IMR-90 (cell line): ENCODE measurements at regions of chr14 and their contacts with region 1.

Region 1: GRCh38 chr14:39015360-39015961 is 87.6 kb downstream of the SEC23A start:
- DNase-seq: peak; percentile 59
- ATAC-seq: peak; percentile 84
- H3K4me3 ChIP-seq: no peak overlapping the region
- H3K27ac ChIP-seq: no peak overlapping the region
- H3K4me1 ChIP-seq: 0 out of 2 replicates have a peak, but pooled peaks cover 2% of the 10 kb centered on the region
- H3K27me3 ChIP-seq: no peaks in the 10 kb centered on the region
- CTCF ChIP-seq: peak; percentile 74
- POLR2A ChIP-seq: no peak
- RAD21 ChIP-seq: peak; percentile 69

Region 2: GRCh38 chr14:38605193-38606114 is 410.0 kb before region 1 on chr14:
- CTCF ChIA-PET with region 1: no interaction called
- POLR2A ChIA-PET with region 1: no interaction called
- dilution Hi-C with region 1: no loop called
- in situ Hi-C with region 1: no loop called
- intact Hi-C with region 1: loop called (anchors 10 kb)
- DNase-seq: no peak
- ATAC-seq: no peak
- H3K4me3 ChIP-seq: no peak overlapping the region
- H3K27ac ChIP-seq: no peak overlapping the region
- H3K4me1 ChIP-seq: no peaks in the 10 kb centered on the region
- H3K27me3 ChIP-seq: no peaks in the 10 kb centered on the region
- CTCF ChIP-seq: 0 out of 2 replicates have a peak, but pooled peaks have one; percentile 7
- POLR2A ChIP-seq: no peak
- RAD21 ChIP-seq: no peak

Region 3: GRCh38 chr14:38710881-38711280 is 304.6 kb before region 1 on chr14:
- CTCF ChIA-PET with region 1: no interaction called
- POLR2A ChIA-PET with region 1: no interaction called
- dilution Hi-C with region 1: no loop called
- in situ Hi-C with region 1: no loop called
- intact Hi-C with region 1: no loop called
- DNase-seq: no peak
- ATAC-seq: no peak
- H3K4me3 ChIP-seq: no peak overlapping the region
- H3K27ac ChIP-seq: no peak overlapping the region
- H3K4me1 ChIP-seq: no peaks in the 10 kb centered on the region
- H3K27me3 ChIP-seq: no peaks in the 10 kb centered on the region
- CTCF ChIP-seq: no peak
- POLR2A ChIP-seq: no peak
- RAD21 ChIP-seq: no peak

Region 4: DNA sequence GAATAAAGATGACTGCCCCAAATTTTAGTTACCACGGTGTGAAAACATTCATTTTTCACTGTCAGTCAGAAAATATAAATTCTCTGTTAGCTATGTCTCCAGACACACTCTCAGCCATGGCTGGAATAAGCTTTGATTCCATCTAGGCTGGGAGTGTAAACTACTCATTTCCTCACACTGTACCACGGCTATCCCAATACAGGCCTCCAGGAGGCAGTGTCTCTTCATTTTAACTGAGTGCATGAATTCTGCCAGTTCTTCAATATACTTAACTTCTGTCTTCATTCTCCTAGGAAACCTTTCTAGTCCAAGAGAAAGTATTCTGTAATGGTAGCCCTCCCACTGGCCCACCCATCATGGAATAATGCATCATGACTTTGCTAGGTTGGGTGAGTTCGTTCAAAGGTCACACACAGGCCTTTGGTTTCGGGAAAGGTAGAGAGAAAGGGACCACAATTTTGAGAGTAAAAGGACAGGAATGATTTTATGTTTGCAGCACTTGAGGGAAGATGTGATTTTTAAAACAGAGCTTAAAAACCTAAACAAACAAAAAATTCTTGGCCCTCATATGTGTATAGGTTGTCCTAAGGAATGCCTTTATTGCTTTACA is 293.5 kb before region 1 on chr14:
- CTCF ChIA-PET with region 1: no interaction called
- POLR2A ChIA-PET with region 1: no interaction called
- dilution Hi-C with region 1: no loop called
- in situ Hi-C with region 1: loop called (anchors 10 kb)
- intact Hi-C with region 1: loop called (anchors 1 kb)
- DNase-seq: peak; percentile 31
- ATAC-seq: peak; percentile 92
- H3K4me3 ChIP-seq: no peak overlapping the region
- H3K27ac ChIP-seq: no peak overlapping the region
- H3K4me1 ChIP-seq: no peaks in the 10 kb centered on the region
- H3K27me3 ChIP-seq: no peaks in the 10 kb centered on the region
- CTCF ChIP-seq: peak; percentile 69
- POLR2A ChIP-seq: no peak
- RAD21 ChIP-seq: peak; percentile 62

Region 5: GRCh38 chr14:39005044-39005880 is 10.2 kb before region 1 on chr14:
- CTCF ChIA-PET with region 1: interaction called, 10 read pairs
- POLR2A ChIA-PET with region 1: no interaction called
- dilution Hi-C with region 1: no loop called
- in situ Hi-C with region 1: no loop called
- intact Hi-C with region 1: no loop called
- DNase-seq: peak; percentile 56
- ATAC-seq: peak; percentile 71
- H3K4me3 ChIP-seq: no peak overlapping the region
- H3K27ac ChIP-seq: peak overlapping the region; percentile 72; the same call in 1 of the 2 replicates
- H3K4me1 ChIP-seq: peaks cover 7% of the 10 kb centered on the region; the same call in 1 of the 2 replicates
- H3K27me3 ChIP-seq: no peaks in the 10 kb centered on the region
- CTCF ChIP-seq: no peak
- POLR2A ChIP-seq: no peak
- RAD21 ChIP-seq: no peak